Panc1 (cell line): ENCODE measurements at regions of chr16 and their contacts with region 1.

Region 1: GRCh38 chr16:88497561-88498462 is 44.7 kb downstream of the ZFPM1 start:
- DNase-seq: no peak
- ATAC-seq: no peak
- H3K4me3 ChIP-seq: no peak overlapping the region
- H3K27ac ChIP-seq: no peak overlapping the region
- H3K4me1 ChIP-seq: no peaks in the 10 kb centered on the region
- H3K27me3 ChIP-seq: no peaks in the 10 kb centered on the region
- CTCF ChIP-seq: no peak

Region 2: DNA sequence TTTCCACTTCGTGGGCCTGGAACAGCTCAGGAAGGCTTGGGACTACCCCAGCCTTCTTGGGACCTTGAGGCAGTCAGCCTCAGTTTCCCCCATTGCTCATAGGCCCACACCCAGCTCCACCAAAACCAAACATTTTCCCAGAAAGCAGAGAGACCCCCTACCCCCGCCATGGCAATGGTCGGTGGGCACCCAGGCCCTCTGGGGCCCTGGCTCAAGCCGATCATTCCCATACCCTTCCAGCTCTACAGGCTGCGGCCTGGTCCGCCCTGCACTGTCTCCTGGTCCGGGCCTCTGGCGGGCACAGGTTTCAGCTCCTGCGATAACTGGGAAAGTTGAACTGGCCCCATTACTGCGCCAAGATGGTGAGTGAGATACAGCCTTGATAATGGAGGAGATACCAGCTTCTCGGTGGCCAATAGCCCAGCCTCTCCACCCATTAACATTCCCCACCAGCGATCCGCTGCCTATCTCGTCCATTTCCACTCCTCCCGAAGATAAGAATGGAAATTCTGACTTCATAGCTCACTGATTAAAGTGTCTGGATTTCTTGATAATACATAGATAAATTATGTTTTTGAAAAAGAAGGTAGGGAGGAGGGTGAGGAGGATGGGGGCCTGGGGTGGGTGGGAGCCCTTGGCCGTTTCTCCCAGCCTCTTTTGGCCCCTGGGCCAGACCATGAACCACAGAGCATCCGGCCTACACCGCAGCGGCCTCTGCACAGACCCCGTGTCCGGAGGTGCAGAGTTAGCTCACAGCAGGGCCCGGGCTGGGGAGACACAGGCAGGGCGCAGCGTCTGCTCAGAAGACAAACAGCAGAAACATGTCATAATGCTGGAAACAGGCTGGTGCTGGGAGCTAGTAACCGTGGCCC is 33.1 kb before region 1 on chr16:
- CTCF ChIA-PET with region 1: no interaction called
- POLR2A ChIA-PET with region 1: interaction called, 10 read pairs
- in situ Hi-C with region 1: no loop called
- intact Hi-C with region 1: no loop called
- DNase-seq: no peak
- ATAC-seq: no peak
- H3K4me3 ChIP-seq: no peak overlapping the region
- H3K27ac ChIP-seq: no peak overlapping the region
- H3K4me1 ChIP-seq: peaks cover 9% of the 10 kb centered on the region
- H3K27me3 ChIP-seq: no peaks in the 10 kb centered on the region
- CTCF ChIP-seq: no peak